GM12878 (cell line): ENCODE measurements at regions of chr19 and their contacts with region 1.

Region 1: DNA sequence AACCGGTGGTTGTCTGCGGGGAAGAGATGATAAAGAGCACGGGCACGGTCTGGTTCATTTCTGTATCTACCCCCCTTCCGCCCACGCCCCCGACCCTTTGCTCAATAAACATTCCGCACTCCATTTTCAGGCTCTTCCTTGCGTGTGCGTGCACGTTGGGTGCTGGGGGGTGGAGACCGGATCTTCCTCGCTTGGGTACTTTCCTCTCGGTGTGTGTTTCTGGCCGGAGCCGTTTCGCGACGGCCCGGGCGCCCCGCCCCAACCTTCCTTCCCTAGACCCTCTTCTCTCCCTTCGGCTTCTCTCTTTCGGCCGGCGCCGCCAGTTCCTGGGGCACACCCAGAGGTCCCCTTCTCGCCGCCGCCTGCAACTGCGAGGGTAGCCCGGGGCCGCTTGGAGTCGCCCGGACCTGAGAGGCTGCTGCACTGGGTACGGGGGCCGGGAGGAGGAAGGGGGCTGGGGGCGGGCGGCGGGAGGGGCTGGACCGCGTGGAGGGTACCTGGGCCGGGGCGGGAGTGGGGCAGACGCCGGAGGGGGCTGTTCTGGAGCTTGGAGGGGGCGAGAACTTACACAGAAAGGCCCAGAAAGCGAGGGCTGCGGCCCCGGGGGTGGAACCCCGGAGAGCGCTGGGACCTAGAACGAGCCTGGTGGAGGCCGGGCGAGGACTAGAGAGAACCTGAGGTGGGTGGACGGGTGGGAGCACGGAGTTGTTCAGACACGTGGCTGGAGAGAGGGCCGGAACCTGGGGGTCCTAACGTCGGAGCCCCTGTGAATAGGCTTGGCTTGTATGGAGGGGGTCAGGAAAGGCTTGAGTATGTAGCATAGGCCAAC is at the start of gene ZNF581:
- DNase-seq: peak; percentile 59
- ATAC-seq: peak; percentile 60
- H3K4me3 ChIP-seq: peak within 1 kb of the TSS; percentile 95
- H3K27ac ChIP-seq: peak within 1 kb of the TSS; percentile 64
- H3K4me1 ChIP-seq: peaks cover 36% of the 10 kb centered on the region
- H3K27me3 ChIP-seq: no peaks in the 10 kb centered on the region
- CTCF ChIP-seq: no peak
- EP300 ChIP-seq: no peak
- POLR2A ChIP-seq: peak; percentile 57
- RAD21 ChIP-seq: no peak
- polyA plus RNA-seq, gene ZNF581: 4.7 to 18.1 TPM

Region 2: DNA sequence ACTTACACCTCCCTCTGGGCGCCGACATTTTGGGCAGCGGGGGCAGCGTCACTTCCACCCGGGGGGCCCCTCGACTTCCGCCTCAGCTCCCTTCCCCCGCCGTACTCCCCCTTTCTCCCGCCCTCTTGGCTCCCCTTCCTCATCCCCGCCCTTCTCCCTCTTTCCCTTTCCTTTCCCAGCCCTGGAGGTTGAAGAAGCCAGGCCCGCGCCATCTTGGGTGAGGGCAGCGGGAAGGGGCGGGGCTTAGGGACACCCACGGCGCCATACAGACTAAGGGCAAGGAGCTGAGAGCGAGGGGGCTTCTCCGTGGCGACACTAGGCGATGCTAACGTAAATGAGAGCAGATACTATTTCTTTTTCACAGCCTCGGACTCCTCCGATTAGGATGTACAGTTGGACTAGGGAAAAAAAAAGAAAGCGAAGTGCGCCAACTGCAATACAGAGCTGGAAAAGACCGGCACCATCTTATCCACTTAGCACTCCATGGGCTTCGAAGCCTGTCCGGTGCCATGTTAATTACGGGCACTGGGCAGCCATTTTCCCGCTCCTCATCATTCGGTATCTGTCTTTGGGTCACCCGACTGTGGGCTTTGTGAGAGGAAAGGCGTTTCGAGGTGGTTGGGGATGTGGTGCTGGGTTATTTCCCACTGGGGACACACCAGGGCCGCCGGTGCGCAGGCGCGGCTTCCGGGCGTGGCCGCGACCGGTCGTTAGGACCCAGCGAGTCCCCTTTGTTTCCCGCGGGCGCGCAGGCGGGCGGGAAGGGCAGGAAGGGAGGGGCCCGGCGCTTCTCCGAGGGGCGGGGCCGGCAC is 43.9 kb before region 1 on chr19 and contains the start of gene FIZ1:
- CTCF ChIA-PET with region 1: interaction called, 3 read pairs
- POLR2A ChIA-PET with region 1: interaction called, 7 read pairs
- RAD21 ChIA-PET with region 1: no interaction called
- SMC1A ChIA-PET with region 1: interaction called, 3 read pairs
- in situ Hi-C with region 1: no loop called
- intact Hi-C with region 1: loop called (anchors 5 kb)
- DNase-seq: peak; percentile 95
- ATAC-seq: peak; percentile 89
- H3K4me3 ChIP-seq: peak within 1 kb of the TSS; percentile 88
- H3K27ac ChIP-seq: peak within 1 kb of the TSS; percentile 99
- H3K4me1 ChIP-seq: peaks cover 8% of the 10 kb centered on the region; the same call in 1 of the 2 replicates
- H3K27me3 ChIP-seq: no peaks in the 10 kb centered on the region
- CTCF ChIP-seq: no peak
- EP300 ChIP-seq: 0 out of 4 replicates have a peak, but pooled peaks of 1 of the 2 experiments have one; percentile 24
- POLR2A ChIP-seq: peak; percentile 74
- RAD21 ChIP-seq: no peak
- polyA plus RNA-seq, gene FIZ1: 0.60 to 1.5 TPM

Region 3: GRCh38 chr19:55674841-55675660 is 31.5 kb after region 1 on chr19 and contains the start of gene EPN1:
- CTCF ChIA-PET with region 1: interaction called, 7 read pairs
- POLR2A ChIA-PET with region 1: interaction called, 5 read pairs
- RAD21 ChIA-PET with region 1: no interaction called
- SMC1A ChIA-PET with region 1: interaction called, 3 read pairs
- in situ Hi-C with region 1: no loop called
- intact Hi-C with region 1: loop called (anchors 5 kb)
- DNase-seq: peak; percentile 74
- ATAC-seq: peak; percentile 64
- H3K4me3 ChIP-seq: peak within 1 kb of the TSS; percentile 92
- H3K27ac ChIP-seq: peak within 1 kb of the TSS; percentile 94
- H3K4me1 ChIP-seq: peaks cover 23% of the 10 kb centered on the region
- H3K27me3 ChIP-seq: no peaks in the 10 kb centered on the region
- CTCF ChIP-seq: no peak
- EP300 ChIP-seq: no peak
- POLR2A ChIP-seq: peak; percentile 72
- RAD21 ChIP-seq: no peak
- polyA plus RNA-seq, gene EPN1: 0.11 to 0.16 TPM